ENCODE measurements at regions of chr12 and their contacts with region 1.

Region 1: GRCh38 chr12:112409064-112409905 is at the start of gene RPL6:
- DNase-seq: peak; percentile 70
- H3K4me3 ChIP-seq: peak within 1 kb of the TSS; percentile 86
- CTCF ChIP-seq: no peak

Region 2: DNA sequence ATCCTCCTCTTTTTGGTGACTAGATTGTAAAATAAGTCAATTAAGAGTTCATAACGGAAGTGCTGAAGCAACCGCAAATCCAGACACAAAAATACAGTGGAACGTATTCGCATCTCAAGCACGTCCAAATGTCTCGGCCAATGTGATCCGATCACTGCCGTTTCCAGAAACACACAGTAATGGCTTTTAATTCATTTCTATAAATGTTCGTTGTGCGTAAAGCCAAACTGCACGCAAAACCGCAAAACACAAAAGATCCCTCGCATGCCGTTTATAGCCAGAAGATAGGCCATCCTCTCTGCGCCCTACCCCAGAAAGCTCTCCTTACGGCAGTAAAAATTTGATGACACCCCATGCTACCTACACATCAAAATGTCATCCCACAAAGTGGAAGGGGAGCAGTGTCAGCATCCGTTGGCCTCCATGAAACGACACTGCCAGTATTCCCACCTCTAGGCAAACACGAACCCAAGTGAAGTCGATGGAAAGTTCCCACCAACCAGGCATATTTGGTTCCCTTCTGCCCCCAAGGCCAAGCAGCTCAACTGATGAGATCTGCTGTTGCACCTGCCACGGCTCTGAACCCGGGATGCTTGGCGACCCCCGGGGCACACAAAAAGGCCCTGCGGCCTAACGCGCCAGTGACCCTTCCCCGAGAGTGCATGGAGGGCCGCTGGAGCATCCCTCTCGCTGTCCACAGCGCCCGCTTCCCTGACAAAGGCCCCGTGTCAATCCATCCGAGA is 28.5 kb before region 1 on chr12:
- CTCF ChIA-PET with region 1: no interaction called
- POLR2A ChIA-PET with region 1: no interaction called
- DNase-seq: no peak
- H3K4me3 ChIP-seq: peak overlapping the region; percentile 72
- CTCF ChIP-seq: no peak

Region 3: DNA sequence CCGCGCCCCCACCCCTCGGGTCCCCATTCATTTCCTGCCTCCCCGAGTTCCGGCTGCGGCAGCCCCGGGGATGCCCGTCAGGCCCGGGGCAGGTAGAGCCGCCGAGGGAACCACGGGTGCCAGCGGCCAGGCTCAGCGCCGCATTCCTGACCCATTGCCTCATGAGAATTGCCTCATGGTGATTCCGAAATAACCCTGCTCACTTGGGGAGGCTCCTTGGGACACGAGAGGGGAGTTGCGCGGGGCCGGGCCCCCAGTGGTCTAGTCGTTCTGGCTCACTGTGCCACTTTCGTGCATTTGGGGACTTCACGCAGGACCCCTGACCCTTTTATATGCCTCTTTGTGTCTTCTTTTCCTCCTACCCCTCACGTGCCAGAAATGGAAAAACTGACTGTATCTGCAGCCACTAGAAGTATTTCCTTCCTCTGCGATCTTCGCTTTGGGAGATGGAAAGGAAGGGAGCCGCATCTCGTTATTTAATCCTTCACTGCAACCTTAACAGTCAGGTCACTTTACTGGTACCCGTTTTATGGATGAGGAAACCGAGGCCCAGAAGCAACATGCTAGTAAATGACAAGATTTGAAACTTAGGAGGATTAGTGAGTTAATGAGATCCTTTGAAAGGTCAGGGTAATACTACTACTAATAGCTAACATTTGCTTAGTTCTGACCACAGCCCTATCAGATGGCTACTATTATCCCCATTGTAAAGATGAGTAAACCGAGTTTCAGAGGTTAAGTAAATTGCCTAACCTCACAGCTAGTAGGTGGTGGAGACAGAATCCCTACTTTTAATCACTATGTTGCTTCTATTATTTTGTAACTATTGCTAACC is 10.2 kb after region 1 on chr12:
- CTCF ChIA-PET with region 1: interaction called, 10 read pairs
- POLR2A ChIA-PET with region 1: no interaction called
- DNase-seq: peak; percentile 29
- H3K4me3 ChIP-seq: peak overlapping the region; percentile 94
- CTCF ChIP-seq: no peak

Region 4: GRCh38 chr12:112473056-112473455 is 63.8 kb after region 1 on chr12:
- CTCF ChIA-PET with region 1: no interaction called
- POLR2A ChIA-PET with region 1: no interaction called
- DNase-seq: no peak
- H3K4me3 ChIP-seq: no peak overlapping the region
- CTCF ChIP-seq: no peak